Caco-2 (cell line): ENCODE measurements at regions of chr5 and their contacts with region 1.

Region 1: DNA sequence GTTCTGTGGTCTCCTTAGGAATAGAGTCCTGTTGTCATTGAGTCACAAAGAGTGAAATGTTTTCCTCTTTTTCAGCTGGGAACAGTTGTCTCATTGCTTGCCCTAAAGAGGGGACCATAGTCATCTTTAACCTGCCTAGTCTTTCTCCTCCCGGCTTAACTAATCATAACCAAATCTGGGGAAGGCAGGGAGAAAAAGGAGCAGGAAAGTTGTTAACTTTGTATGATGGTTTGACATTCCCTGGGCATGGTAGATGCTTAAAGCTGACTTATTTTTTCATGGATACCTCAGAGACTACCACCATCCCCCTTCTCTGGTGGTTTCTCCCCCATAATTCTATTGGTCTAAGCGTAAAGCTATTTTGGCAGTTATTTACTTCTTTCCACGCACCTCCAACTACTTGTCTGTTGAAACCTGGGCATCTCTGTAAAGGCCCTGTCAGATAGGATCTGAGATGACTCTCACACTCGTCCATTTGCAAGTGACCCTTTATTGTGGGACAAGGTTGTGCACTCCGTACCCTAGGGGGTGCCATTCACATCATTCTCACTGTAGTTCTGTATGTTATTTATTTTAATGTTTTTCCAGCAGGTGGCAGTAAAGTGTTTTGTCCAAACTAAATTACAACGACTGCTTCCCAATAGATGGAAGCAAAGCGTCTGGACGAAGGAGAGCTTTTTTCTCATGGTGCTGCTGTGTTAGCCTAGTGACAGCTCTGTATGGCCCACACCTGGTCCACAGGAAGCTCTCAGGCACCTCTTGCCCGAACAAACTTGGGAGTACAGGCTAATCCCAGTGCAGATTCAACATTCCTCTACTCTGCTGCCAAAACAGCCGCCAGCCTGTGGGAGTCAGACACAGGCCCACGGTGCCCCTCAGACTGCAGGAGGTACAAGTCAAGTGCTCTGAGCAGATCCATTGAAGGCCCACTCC is 3.0 kb upstream of the FAM13B start:
- DNase-seq: peak; percentile 84 to 88
- H3K4me3 ChIP-seq: no peak overlapping the region
- H3K4me3 Mint-ChIP-seq: peak overlapping the region; percentile 15
- H3K27ac Mint-ChIP-seq: peak overlapping the region; percentile 28
- H3K4me1 ChIP-seq: peaks cover 24% of the 10 kb centered on the region
- H3K4me1 Mint-ChIP-seq: peaks cover 7% of the 10 kb centered on the region
- H3K27me3 ChIP-seq: no peaks in the 10 kb centered on the region
- H3K27me3 Mint-ChIP-seq: no peaks in the 10 kb centered on the region
- CTCF ChIP-seq: peak; percentile 89

Region 2: GRCh38 chr5:137856916-137857862 is 178.7 kb before region 1 on chr5:
- CTCF ChIA-PET with region 1: no interaction called
- POLR2A ChIA-PET with region 1: no interaction called
- intact Hi-C with region 1: no loop called
- DNase-seq: no peak
- H3K4me3 ChIP-seq: no peak overlapping the region
- H3K4me3 Mint-ChIP-seq: no peak overlapping the region
- H3K27ac Mint-ChIP-seq: no peak overlapping the region
- H3K4me1 ChIP-seq: 0 out of 2 replicates have a peak, but pooled peaks cover 4% of the 10 kb centered on the region
- H3K4me1 Mint-ChIP-seq: no peaks in the 10 kb centered on the region
- H3K27me3 ChIP-seq: no peaks in the 10 kb centered on the region
- H3K27me3 Mint-ChIP-seq: peaks cover 4% of the 10 kb centered on the region
- CTCF ChIP-seq: no peak

Region 3: GRCh38 chr5:138018844-138019243 is 17.0 kb before region 1 on chr5:
- CTCF ChIA-PET with region 1: interaction called, 8 read pairs
- POLR2A ChIA-PET with region 1: interaction called, 3 read pairs
- intact Hi-C with region 1: loop called (anchors 1 kb)
- DNase-seq: peak in 1 of 2 experiments; percentile 51
- H3K4me3 ChIP-seq: no peak overlapping the region
- H3K4me3 Mint-ChIP-seq: no peak overlapping the region
- H3K27ac Mint-ChIP-seq: peak overlapping the region; percentile 31
- H3K4me1 ChIP-seq: peaks cover 52% of the 10 kb centered on the region
- H3K4me1 Mint-ChIP-seq: peaks cover 35% of the 10 kb centered on the region
- H3K27me3 ChIP-seq: no peaks in the 10 kb centered on the region
- H3K27me3 Mint-ChIP-seq: no peaks in the 10 kb centered on the region
- CTCF ChIP-seq: no peak

Region 4: DNA sequence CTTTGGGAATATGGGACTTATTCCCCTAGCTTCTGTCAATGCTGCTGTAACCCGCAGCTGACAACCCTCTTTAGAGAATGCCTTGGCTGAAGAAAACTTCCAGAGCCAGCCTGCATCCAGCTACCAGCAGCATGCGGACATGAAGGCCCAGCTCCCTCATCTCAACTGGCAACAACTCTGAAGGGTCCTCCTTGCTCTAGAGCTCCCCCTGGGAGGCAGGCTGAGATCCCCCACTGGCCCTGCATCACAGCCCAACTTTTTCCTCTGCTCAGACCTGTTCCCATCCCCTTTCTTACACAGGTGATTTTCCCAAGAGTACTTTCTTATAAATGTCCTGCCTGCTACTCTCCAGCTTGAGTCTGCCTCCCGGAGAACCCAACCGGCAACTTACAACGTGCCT is 29.2 kb after region 1 on chr5:
- CTCF ChIA-PET with region 1: interaction called, 36 read pairs
- POLR2A ChIA-PET with region 1: no interaction called
- intact Hi-C with region 1: loop called (anchors 1 kb)
- DNase-seq: peak; percentile 42 to 58
- H3K4me3 ChIP-seq: no peak overlapping the region
- H3K4me3 Mint-ChIP-seq: no peak overlapping the region
- H3K27ac Mint-ChIP-seq: no peak overlapping the region
- H3K4me1 ChIP-seq: 0 out of 2 replicates have a peak, but pooled peaks cover 6% of the 10 kb centered on the region
- H3K4me1 Mint-ChIP-seq: no peaks in the 10 kb centered on the region
- H3K27me3 ChIP-seq: no peaks in the 10 kb centered on the region
- H3K27me3 Mint-ChIP-seq: no peaks in the 10 kb centered on the region
- CTCF ChIP-seq: peak; percentile 67 to 68

Region 5: DNA sequence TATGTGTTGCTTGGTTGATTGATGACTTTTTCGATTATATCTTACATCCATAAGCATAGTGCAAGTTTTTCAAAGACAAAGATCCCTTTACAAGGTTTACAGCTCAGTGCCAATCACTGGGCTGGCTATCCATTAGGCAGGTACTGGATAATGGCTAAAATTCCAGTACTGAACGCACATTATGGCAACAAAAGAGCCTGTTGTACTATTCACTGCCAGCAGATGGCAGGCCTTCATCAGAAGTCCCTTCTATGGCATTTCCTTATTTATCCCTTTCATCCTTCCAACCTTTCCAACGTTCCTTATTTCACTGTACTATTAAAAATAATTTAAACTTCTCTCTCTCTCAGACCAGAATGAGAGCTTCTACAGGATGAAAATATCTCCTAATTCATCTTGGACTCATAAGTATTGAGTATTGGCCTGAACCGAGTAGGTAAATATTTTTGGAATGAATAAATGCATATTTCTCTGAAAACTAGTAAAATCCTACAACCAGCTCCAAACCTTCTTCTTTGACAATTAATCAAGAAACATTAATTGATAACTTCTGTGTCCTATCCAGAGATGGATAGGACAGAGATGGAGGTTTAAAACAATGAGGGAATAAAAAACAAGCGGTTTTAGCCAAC is 41.3 kb after region 1 on chr5:
- CTCF ChIA-PET with region 1: interaction called, 8 read pairs
- POLR2A ChIA-PET with region 1: no interaction called
- intact Hi-C with region 1: loop called (anchors 1 kb)
- DNase-seq: peak; percentile 67 to 75
- H3K4me3 ChIP-seq: no peak overlapping the region
- H3K4me3 Mint-ChIP-seq: no peak overlapping the region
- H3K27ac Mint-ChIP-seq: no peak overlapping the region
- H3K4me1 ChIP-seq: peaks cover 21% of the 10 kb centered on the region
- H3K4me1 Mint-ChIP-seq: peaks cover 16% of the 10 kb centered on the region
- H3K27me3 ChIP-seq: no peaks in the 10 kb centered on the region
- H3K27me3 Mint-ChIP-seq: no peaks in the 10 kb centered on the region
- CTCF ChIP-seq: peak; percentile 79 to 88

Region 6: DNA sequence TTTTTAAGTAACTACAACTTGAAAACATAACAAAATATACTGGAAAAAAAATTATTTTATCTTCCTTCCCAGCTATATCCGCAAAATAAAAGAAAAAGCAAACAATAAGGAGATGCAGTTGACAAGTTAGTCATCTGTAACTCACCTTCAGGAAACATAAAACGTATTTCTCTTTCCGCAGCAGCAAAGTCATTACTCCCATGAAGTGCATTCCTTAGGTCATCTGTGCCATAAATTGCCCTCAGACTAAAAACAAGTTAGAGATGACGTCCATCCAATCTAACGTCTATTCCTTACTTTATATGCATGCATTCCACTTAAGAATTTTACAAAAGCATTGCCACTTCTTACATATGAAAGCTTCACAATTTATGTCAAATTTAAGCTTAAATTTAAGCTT is 92.5 kb after region 1 on chr5:
- CTCF ChIA-PET with region 1: interaction called, 23 read pairs
- POLR2A ChIA-PET with region 1: no interaction called
- intact Hi-C with region 1: loop called (anchors 1 kb)
- DNase-seq: no peak
- H3K4me3 ChIP-seq: no peak overlapping the region
- H3K4me3 Mint-ChIP-seq: no peak overlapping the region
- H3K27ac Mint-ChIP-seq: no peak overlapping the region
- H3K4me1 ChIP-seq: 0 out of 2 replicates have a peak, but pooled peaks cover 6% of the 10 kb centered on the region
- H3K4me1 Mint-ChIP-seq: peaks cover 5% of the 10 kb centered on the region
- H3K27me3 ChIP-seq: no peaks in the 10 kb centered on the region
- H3K27me3 Mint-ChIP-seq: no peaks in the 10 kb centered on the region
- CTCF ChIP-seq: no peak